Common myeloid progenitor, CD34-positive (primary cell): ENCODE measurements at regions of chr6 and their contacts with region 1.

Region 1: GRCh38 chr6:159134701-159135364 is 34.4 kb upstream of the FNDC1 start:
- DNase-seq: peak; percentile 76 to 86 (median 77)
- H3K4me3 ChIP-seq: no peak overlapping the region
- H3K27ac ChIP-seq: no peak overlapping the region
- H3K4me1 ChIP-seq: no peaks in the 10 kb centered on the region
- H3K27me3 ChIP-seq: peaks cover 0 to 7% (median 0%) of the 10 kb centered on the region in 5 experiments

Region 2: GRCh38 chr6:158999666-159000403 is 135.0 kb before region 1 on chr6 and contains the start of gene RSPH3:
- CTCF ChIA-PET with region 1: interaction called, 426 read pairs
- POLR2A ChIA-PET with region 1: no interaction called
- DNase-seq: peak; percentile 71 to 76 (median 74)
- H3K4me3 ChIP-seq: peak within 1 kb of the TSS; percentile 74 to 96 (median 88)
- H3K27ac ChIP-seq: peak within 1 kb of the TSS; percentile 50 to 84
- H3K4me1 ChIP-seq: peaks cover 4 to 27% (median 20%) of the 10 kb centered on the region in 4 experiments
- H3K27me3 ChIP-seq: no peaks in the 10 kb centered on the region

Region 3: DNA sequence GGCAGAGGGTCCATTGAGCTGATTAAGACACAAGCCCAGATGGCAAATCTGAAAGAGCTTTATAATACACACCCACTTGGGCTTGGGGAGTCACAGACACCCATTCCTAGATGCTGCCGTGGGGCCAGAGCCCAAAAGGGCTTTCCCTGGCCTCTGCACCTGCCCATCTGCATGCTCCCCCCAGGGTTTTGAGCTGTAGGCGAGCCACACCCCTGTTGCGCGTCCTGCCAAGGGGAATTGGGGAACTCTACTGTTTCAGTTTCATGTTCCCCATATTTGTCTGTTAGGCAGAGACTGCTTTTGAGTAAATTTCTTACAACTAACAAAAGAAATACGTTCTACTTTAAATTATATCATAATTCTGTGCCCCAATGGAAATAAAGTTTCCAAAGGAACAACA is 18.5 kb before region 1 on chr6:
- CTCF ChIA-PET with region 1: interaction called, 122 read pairs
- POLR2A ChIA-PET with region 1: no interaction called
- DNase-seq: peak in 1 of 3 donors; percentile 48
- H3K4me3 ChIP-seq: no peak overlapping the region
- H3K27ac ChIP-seq: no peak overlapping the region
- H3K4me1 ChIP-seq: peaks cover 0 to 18% (median 11%) of the 10 kb centered on the region in 4 experiments
- H3K27me3 ChIP-seq: no peaks in the 10 kb centered on the region